Mucosa of descending colon (tissue), 3 donors: ENCODE measurements at regions of chr15 and their contacts with region 1.

Region 1: GRCh38 chr15:83248151-83249029 is 36.1 kb downstream of the BNC1 start:
- DNase-seq: peak in 1 of 3 donors; percentile 61
- ATAC-seq: peak; percentile 60
- H3K4me3 ChIP-seq: no peak overlapping the region
- H3K4me1 ChIP-seq: no peaks in the 10 kb centered on the region
- CTCF ChIP-seq: no peak

Region 2: DNA sequence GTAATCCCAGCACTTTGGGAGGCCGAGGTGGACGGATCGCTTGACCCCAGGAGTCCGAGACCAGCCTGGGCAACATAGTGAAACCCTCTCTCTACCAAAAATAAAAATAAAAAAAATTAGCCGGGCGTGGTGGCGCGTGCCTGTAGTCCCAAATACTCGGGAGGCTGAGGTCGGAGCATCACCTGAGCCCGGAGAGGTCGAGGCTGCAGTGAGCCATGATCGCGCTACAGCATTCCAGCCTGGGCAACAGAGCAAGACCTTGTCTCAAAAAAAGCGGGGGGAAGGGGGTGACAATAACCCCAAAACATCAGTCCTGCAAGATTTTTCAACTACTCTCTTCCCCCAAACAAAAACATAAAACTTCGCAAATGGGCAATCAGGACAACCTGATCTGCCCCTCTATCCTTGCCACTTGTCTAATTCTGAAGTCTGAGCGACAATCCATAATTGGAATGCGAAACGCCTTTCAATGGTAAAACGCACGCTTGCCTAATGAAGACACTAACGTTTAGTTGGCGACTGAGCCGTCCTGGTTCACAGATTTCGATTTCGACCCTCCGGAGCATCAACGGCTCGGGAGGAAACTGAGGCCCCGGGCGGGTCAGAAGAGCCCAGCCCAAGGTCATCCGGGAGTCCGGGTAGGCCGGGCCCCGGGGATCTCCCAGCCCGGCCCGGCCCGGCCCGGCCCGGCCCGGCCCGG is 182.2 kb before region 1 on chr15:
- intact Hi-C with region 1: no loop called
- DNase-seq: peak in 2 of 3 donors; percentile 27 to 46
- ATAC-seq: no peak
- H3K4me3 ChIP-seq: peak overlapping the region; percentile 88
- H3K4me1 ChIP-seq: peaks cover 43% of the 10 kb centered on the region
- CTCF ChIP-seq: no peak

Region 3: DNA sequence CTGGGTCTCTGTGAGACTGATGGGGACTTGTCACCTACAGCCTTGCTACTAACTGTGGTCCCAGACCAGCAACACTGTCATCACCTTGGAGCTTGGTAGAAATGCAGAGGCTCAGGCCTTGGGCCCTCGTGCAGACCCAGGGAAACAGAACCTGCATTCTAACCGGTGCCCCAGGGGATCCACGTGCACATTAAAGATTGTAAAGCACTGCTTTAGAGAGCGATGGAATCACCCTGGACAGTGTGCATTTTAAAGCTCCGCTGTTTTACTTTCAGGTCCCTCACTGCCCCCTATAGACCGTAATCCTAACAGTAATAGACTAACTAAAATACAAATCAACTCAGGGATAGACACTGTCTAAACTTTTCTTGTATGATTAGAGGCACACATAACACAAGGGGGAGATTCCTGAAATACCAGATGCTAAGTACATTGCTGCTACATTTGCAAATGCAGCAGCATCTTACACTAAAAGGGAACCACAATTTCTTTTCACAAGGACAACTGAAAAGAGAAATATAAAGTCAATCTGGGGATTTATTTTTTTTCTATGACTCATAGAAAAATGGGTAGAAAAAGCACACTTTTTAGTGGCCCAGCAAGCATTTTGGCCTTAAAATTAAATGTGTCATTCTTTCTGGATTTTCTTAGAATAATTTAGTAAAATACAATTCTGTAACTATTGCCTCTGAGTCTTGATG is 188.2 kb after region 1 on chr15:
- intact Hi-C with region 1: loop called in 1 of 2 experiments (anchors 5 kb)
- DNase-seq: peak in 1 of 3 donors; percentile 5
- ATAC-seq: no peak
- H3K4me3 ChIP-seq: no peak overlapping the region
- H3K4me1 ChIP-seq: no peaks in the 10 kb centered on the region
- CTCF ChIP-seq: no peak